Calu3 (cell line): ENCODE measurements at regions of chr5 and their contacts with region 1.

Region 1: GRCh38 chr5:65243161-65243560 is 238.6 kb downstream of the ADAMTS6 start:
- DNase-seq: no peak
- H3K4me3 Mint-ChIP-seq: no peak overlapping the region
- H3K27ac Mint-ChIP-seq: no peak overlapping the region
- H3K4me1 Mint-ChIP-seq: no peaks in the 10 kb centered on the region
- H3K27me3 Mint-ChIP-seq: no peaks in the 10 kb centered on the region
- CTCF ChIP-seq: no peak

Region 2: GRCh38 chr5:65190328-65191053 is 52.7 kb before region 1 on chr5:
- CTCF ChIA-PET with region 1: no interaction called
- intact Hi-C with region 1: no loop called
- DNase-seq: no peak
- H3K4me3 Mint-ChIP-seq: no peak overlapping the region
- H3K27ac Mint-ChIP-seq: no peak overlapping the region
- H3K4me1 Mint-ChIP-seq: no peaks in the 10 kb centered on the region
- H3K27me3 Mint-ChIP-seq: no peaks in the 10 kb centered on the region
- CTCF ChIP-seq: no peak

Region 3: DNA sequence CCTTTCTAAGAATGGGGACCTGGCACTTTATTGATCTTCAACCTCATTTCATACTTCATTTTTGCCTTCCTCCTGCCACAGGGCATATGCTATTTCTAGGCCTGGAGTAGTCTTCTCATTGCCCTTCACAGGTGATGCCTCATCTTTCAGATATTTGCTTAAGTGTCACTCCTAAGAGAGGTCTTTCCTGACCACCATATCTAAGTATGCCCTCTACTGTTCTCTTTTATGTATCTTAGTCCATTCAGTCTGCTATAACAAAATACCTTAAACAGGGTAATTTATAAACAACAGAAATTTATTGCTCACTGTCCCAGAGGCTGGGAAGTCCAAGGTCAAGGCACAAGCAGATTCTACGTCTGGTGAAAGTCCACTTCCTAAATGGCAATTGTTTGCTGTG is 139.4 kb after region 1 on chr5:
- CTCF ChIA-PET with region 1: interaction called, 11 read pairs
- intact Hi-C with region 1: no loop called
- DNase-seq: no peak
- H3K4me3 Mint-ChIP-seq: no peak overlapping the region
- H3K27ac Mint-ChIP-seq: no peak overlapping the region
- H3K4me1 Mint-ChIP-seq: no peaks in the 10 kb centered on the region
- H3K27me3 Mint-ChIP-seq: no peaks in the 10 kb centered on the region
- CTCF ChIP-seq: no peak